Activated CD4-positive, alpha-beta memory T cell treated with anti-CD3 and anti-CD28 coated beads for 36 hours (primary cell): ENCODE measurements at regions of chr6 and their contacts with region 1.

Region 1: DNA sequence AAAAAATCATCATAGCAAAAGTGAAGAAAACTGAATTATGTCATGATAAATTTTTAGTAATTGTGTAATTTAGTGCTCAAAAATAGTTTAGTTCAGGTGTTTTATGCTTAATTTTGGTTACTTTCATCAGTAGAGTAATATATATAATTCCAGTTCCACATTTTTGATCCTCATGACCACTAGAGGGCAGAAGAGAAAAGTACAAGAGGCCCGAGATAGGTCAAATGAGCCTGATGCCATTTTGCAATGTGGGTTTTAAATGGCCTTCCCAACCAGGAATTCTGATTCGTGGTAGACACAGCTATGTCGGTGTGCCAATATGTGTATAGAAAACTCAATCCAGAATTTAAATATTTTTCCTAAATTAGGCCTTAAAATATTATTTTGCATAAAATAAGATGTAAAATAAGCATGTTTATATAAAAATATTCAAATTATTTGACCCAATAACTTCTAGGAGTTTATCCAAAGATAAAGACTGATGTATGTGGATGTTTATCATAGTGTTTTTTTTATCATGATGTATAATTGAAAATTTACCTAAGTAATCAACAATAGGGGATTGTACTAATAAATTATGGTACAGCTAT is 159.7 kb upstream of the RPS6KA2 start:
- DNase-seq: no peak
- H3K4me3 Mint-ChIP-seq: no peak overlapping the region
- H3K27ac Mint-ChIP-seq: no peak overlapping the region
- H3K4me1 Mint-ChIP-seq: no peaks in the 10 kb centered on the region
- H3K27me3 Mint-ChIP-seq: peaks cover 1% of the 10 kb centered on the region

Region 2: GRCh38 chr6:166806962-166807757 is 20.4 kb after region 1 on chr6:
- CTCF ChIA-PET with region 1: no interaction called
- POLR2A ChIA-PET with region 1: no interaction called
- intact Hi-C with region 1: no loop called
- DNase-seq: no peak
- H3K4me3 Mint-ChIP-seq: no peak overlapping the region
- H3K27ac Mint-ChIP-seq: no peak overlapping the region
- H3K4me1 Mint-ChIP-seq: no peaks in the 10 kb centered on the region
- H3K27me3 Mint-ChIP-seq: no peaks in the 10 kb centered on the region

Region 3: DNA sequence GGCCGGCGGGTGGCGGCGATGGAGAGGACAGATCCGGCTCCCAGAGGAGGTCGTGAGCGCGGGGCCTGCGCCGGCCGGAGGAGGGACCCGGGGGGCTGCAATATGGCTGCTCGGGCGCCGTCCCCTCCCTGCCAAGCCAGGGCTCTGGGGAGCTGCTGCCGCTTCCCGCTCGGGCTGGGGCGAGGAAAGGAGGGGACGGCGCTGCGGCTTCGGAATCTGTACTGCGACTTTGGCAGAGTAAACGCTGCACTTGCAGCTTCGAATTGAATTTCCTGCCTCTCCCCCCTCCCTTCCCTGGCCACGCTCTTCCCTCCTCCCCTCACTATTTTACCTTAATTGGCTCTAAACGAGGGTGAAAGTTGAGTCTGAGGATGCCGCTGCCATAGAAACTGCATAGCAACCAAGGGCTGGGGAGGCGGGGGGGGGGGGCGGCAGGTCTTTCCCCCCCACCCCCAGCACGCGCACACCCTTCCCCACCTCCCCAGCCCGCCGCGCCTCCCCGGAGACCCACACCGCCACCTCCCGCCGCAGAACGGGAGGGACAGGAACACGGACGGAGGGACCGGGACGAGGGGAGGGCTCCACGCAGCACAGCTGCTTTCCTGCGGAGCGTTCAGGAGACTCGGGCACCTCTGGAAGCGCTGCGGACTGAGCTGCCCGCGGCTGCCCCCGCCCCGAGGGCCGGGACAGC is 75.6 kb after region 1 on chr6:
- CTCF ChIA-PET with region 1: interaction called, 4 read pairs
- POLR2A ChIA-PET with region 1: no interaction called
- intact Hi-C with region 1: loop called (anchors 5 kb)
- DNase-seq: peak; percentile 53
- H3K4me3 Mint-ChIP-seq: peak overlapping the region; percentile 75
- H3K27ac Mint-ChIP-seq: no peak overlapping the region
- H3K4me1 Mint-ChIP-seq: peaks cover 6% of the 10 kb centered on the region
- H3K27me3 Mint-ChIP-seq: peaks cover 2% of the 10 kb centered on the region

Region 4: GRCh38 chr6:166989427-166990032 is 202.7 kb after region 1 on chr6:
- CTCF ChIA-PET with region 1: interaction called, 42 read pairs
- POLR2A ChIA-PET with region 1: no interaction called
- intact Hi-C with region 1: loop called (anchors 1 kb)
- DNase-seq: peak; percentile 53
- H3K4me3 Mint-ChIP-seq: no peak overlapping the region
- H3K27ac Mint-ChIP-seq: no peak overlapping the region
- H3K4me1 Mint-ChIP-seq: peaks cover 24% of the 10 kb centered on the region
- H3K27me3 Mint-ChIP-seq: no peaks in the 10 kb centered on the region

Region 5: DNA sequence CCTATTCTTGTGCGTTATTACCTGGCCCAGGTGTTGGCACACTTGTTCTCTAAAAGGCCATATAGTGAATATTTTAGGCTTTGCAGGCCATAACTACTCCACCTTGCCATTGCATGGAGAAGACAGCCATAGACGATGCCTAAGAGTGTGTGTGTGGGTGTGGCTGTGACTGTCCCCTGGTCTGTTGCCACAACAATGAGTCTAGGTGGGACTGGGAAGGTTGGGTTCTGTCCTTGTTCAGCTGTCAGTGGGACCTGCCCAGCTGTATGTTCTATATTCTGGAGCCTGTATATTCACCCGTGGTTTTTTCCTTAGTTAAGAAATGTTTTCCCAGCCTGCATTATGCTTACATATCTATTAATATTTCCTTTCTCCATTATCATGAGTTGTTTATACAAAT is 251.0 kb after region 1 on chr6:
- CTCF ChIA-PET with region 1: no interaction called
- POLR2A ChIA-PET with region 1: no interaction called
- intact Hi-C with region 1: no loop called
- DNase-seq: no peak
- H3K4me3 Mint-ChIP-seq: no peak overlapping the region
- H3K27ac Mint-ChIP-seq: no peak overlapping the region
- H3K4me1 Mint-ChIP-seq: peaks cover 24% of the 10 kb centered on the region
- H3K27me3 Mint-ChIP-seq: no peaks in the 10 kb centered on the region

Region 6: DNA sequence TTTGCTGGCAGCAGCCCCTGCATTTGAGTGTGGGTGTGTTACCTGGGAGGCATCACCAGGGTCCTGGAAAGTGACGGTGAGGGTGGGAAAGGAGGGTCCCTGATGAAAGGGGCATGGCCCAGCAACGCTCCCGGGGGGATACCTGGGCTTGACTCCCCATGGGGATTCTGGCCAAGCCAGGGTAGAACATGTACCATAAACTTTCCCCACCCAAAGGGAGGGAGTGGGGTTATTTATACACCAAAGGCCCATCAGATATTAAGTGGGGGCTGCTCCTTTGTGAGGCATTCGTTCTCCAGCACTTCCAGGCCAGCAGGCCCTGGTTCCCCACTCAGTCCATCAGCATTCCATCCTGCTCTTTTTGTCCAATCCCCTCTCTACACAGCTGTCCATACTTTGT is 315.5 kb after region 1 on chr6:
- CTCF ChIA-PET with region 1: no interaction called
- POLR2A ChIA-PET with region 1: no interaction called
- intact Hi-C with region 1: no loop called
- DNase-seq: no peak
- H3K4me3 Mint-ChIP-seq: no peak overlapping the region
- H3K27ac Mint-ChIP-seq: no peak overlapping the region
- H3K4me1 Mint-ChIP-seq: peaks cover 35% of the 10 kb centered on the region
- H3K27me3 Mint-ChIP-seq: no peaks in the 10 kb centered on the region